Common myeloid progenitor, CD34-positive (primary cell): ENCODE measurements at regions of chr1 and their contacts with region 1.

Region 1: DNA sequence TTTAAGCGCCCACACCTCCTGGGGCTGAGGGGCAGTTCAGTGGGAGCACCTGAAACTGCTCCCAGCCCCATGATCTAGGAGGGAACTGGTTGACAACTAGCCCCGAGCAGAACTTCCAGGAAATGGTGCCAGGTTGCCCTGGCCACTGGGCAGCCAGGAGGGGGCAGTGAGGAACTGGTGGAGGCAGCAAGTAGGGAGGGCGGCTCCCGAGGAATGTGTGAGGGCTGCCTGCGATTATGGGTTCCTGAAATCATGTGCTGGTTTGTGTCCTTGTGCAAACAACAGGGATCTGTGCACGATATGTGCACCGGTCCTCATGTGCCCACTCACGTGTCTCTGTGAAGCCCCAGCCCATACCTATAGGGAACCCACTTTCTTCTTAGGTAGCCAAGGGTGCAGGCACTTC is 9.9 kb downstream of the GPR3 start:
- DNase-seq: peak in 2 of 3 donors; percentile 63 to 67
- H3K4me3 ChIP-seq: peak overlapping the region in 2 of 7 experiments; percentile 32 to 58
- H3K27ac ChIP-seq: peak overlapping the region in 1 of 2 experiments; percentile 25
- H3K4me1 ChIP-seq: peaks cover 12 to 60% (median 58%) of the 10 kb centered on the region in 4 experiments
- H3K27me3 ChIP-seq: no peaks in the 10 kb centered on the region

Region 2: DNA sequence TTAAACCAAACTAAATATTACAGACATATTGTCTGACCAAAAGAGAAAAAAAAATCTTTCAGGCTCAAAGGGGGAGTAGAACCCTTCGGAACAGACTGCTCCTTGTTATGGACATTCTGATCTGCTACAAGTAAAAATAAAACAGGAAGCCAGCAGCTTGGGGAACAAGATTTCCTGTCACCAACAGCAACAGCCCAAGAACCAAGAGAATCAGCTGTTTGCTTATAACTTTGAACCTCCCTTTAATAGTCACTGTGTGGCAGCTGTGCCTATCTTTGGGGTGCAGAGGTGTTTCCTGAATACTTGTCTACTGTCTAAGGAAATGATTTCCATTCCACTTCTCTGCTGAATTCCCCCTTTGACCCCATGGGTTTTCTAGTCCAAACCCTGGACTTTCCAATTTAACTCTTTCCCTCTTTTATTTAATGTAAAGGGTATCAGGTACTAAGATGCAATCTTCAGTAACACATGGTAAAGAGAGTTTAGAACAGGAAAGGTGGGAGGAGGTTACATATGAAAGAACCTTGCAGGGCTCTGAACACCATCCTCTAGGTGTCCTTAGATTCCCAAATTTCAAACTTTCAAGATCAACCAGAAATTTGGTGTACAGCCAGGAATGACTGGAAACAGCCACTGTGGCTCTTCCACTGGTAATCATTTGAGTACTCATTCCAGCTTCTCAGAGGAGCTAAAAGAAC is 28.7 kb after region 1 on chr1:
- CTCF ChIA-PET with region 1: interaction called, 12 read pairs
- POLR2A ChIA-PET with region 1: no interaction called
- DNase-seq: peak; percentile 36 to 87 (median 76)
- H3K4me3 ChIP-seq: peak overlapping the region in 6 of 7 experiments; percentile 22 to 59 (median 32)
- H3K27ac ChIP-seq: peak overlapping the region; percentile 29 to 79
- H3K4me1 ChIP-seq: peaks cover 67 to 98% (median 97%) of the 10 kb centered on the region in 4 experiments
- H3K27me3 ChIP-seq: no peaks in the 10 kb centered on the region

Region 3: DNA sequence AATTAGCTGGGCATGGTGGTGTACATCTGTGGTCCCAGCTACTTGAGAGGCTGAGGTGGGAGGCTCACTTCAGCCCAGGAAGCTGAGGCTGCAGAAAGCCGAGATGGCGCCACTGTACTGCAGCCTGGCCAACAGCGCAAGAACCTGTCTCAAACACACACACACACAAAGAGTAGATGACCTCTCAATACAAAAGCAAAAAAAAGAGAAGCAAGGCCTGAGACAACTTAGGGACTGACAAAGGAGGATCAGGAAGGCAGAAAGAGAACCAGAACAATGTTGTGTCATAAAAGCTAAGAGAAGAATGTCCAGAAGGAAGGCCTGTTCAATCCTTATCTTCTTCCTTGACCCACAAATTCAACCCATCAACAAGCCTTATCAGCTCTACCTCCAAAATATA is 69.1 kb after region 1 on chr1:
- CTCF ChIA-PET with region 1: no interaction called
- POLR2A ChIA-PET with region 1: no interaction called
- DNase-seq: no peak
- H3K4me3 ChIP-seq: no peak overlapping the region
- H3K27ac ChIP-seq: no peak overlapping the region
- H3K4me1 ChIP-seq: peaks cover 3 to 31% (median 13%) of the 10 kb centered on the region in 4 experiments
- H3K27me3 ChIP-seq: no peaks in the 10 kb centered on the region

Region 4: DNA sequence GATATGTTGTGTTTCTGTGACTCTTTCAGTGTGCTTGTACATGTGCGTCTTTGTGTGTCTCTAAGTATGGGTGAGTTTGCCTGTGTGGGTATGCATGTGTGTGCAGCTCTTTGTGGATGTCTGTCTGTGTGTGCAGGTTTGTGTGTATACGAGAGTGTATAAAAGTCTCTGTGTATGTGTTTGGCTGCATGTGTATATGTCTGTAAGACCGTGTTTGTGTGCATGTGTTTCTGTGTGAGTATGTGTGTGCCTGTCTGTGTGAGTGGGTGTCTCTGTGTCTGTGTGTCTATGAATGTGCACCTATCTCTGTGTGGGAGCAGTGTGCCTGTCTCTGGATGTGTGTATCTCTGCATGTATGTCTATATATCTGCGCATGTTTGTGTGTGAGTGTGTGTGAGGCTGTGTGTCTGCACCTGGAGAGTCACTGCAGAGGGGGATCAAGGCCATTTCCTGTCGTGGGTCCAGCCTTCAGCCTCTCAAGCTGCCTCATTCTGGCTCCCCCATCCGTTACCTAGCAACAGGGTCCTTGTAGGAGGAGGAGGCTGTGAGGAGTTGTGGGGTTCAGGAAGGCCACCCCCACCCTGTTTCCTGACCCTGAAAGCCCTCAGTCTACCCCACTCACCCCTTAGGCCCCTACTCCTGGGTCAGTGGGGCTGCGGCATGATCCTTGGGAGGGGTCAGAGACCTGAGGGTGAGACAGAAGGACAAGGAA is 222.3 kb after region 1 on chr1:
- CTCF ChIA-PET with region 1: no interaction called
- POLR2A ChIA-PET with region 1: no interaction called
- DNase-seq: peak in 2 of 3 donors; percentile 63 to 79
- H3K4me3 ChIP-seq: peak overlapping the region in 4 of 7 experiments; percentile 0 to 19 (median 18)
- H3K27ac ChIP-seq: peak overlapping the region; percentile 60 to 78
- H3K4me1 ChIP-seq: peaks cover 32 to 83% (median 61%) of the 10 kb centered on the region in 4 experiments
- H3K27me3 ChIP-seq: no peaks in the 10 kb centered on the region